Mammary epithelial cell (primary cell): ENCODE measurements at regions of chr1 and their contacts with region 1.

Region 1: GRCh38 chr1:212990276-212990675 is 25.4 kb downstream of the ANGEL2 start:
- DNase-seq: no peak
- H3K4me3 ChIP-seq: no peak overlapping the region
- H3K27ac ChIP-seq: no peak overlapping the region
- H3K4me1 ChIP-seq: peaks cover 4% of the 10 kb centered on the region
- H3K27me3 ChIP-seq: no peaks in the 10 kb centered on the region
- CTCF ChIP-seq: no peak

Region 2: DNA sequence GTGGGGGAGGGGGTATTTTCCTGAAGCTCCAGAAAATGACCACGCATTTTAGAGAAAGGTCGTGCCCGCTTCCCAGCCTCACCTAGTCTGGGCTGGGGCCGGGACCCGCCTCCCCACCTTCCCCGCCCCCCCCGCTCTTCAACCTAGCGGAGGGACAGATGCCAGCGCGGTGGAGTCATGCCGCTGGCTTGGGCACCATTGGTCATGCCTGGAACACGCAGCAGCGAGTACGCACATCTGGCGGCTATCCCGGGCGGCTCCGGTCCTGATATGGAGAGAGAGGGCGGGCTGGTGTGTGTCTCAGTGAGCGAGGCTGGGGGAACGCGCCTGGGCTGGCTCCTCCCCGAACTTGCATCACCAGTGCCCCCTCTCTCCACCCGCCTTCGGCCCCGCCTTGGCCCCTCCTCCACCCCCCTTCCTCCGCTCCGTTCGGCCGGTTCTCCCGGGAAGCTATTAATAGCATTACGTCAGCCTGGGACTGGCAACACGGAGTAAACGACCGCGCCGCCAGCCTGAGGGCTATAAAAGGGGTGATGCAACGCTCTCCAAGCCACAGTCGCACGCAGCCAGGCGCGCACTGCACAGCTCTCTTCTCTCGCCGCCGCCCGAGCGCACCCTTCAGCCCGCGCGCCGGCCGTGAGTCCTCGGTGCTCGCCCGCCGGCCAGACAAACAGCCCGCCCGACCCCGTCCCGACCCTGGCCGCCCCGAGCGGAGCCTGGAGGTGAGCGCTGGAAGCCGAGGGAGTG is 381.9 kb before region 1 on chr1 and contains the start of gene ATF3:
- CTCF ChIA-PET with region 1: no interaction called
- dilution Hi-C with region 1: no loop called
- in situ Hi-C with region 1: no loop called
- intact Hi-C with region 1: loop called (anchors 10 kb)
- DNase-seq: peak; percentile 99
- H3K4me3 ChIP-seq: peak within 1 kb of the TSS; percentile 69 to 76 (median 75)
- H3K27ac ChIP-seq: peak within 1 kb of the TSS; percentile 89
- H3K4me1 ChIP-seq: peaks cover 24% of the 10 kb centered on the region
- H3K27me3 ChIP-seq: no peaks in the 10 kb centered on the region
- CTCF ChIP-seq: no peak
- total RNA-seq, gene ATF3: 3.5 to 17.8 TPM

Region 3: DNA sequence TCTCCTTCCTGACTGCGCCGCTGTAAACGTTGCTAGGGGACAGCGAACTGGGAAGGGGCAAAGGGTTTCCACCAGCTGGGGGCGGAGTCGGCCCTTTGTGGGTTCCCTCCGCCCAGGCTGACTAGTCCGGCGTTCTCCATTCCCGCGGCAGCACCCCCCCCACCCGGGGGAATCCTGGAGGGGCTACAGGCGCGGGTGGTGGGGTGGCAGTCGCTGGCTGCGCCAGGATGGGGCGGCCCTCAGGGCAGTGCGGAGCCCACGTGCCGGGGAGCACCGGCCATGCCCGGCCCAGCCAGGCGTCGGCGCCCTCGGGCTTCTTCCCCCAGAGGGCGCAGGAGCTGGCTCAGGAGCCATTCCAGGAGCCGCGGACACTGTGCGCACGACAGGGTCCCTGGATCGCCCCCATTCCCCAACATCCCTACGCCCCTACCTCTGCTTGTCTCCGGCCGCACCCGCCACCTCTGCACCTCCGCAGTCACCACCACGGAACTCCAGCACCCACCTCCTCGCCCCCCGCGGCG is 291.1 kb before region 1 on chr1:
- CTCF ChIA-PET with region 1: no interaction called
- dilution Hi-C with region 1: no loop called
- in situ Hi-C with region 1: no loop called
- intact Hi-C with region 1: loop called (anchors 5 kb)
- DNase-seq: no peak
- H3K4me3 ChIP-seq: peak overlapping the region; percentile 33 to 53 (median 52)
- H3K27ac ChIP-seq: no peak overlapping the region
- H3K4me1 ChIP-seq: peaks cover 20% of the 10 kb centered on the region
- H3K27me3 ChIP-seq: peaks cover 28% of the 10 kb centered on the region
- CTCF ChIP-seq: peak in 1 of 2 donors; percentile 52

Region 4: DNA sequence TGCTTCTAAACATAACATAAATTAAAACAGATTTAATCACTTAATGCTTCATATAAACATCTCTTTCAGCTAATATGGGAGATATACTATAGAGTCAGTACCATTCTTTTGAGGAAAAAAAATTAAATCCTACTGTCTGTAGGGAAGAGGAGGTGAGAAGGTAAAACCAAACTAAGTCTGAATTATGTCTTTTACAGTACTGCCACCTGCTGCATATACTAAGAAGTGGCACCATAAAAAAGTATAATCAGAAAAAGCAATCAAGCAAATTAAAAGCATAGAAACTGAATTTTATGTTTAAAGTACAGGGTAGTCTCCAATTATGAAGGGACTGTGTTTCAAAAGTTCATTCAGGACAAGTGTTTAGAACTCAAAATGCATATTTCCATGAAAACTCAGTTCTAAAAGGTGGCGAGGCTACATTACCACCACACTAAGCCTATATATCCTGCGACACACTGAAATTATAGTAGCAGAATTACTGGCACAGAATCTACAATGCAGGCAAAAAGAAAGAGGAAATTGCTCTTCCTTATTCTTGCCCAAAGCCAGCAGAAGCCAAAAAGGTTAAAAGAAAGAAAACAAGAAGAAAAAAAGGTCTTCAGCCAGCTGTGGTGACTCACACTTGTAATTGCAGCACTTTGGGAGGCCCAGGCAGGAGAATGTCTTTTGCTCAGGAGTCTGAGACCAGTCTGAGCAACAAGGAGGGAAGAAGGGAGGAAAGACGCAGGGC is 207.7 kb before region 1 on chr1:
- CTCF ChIA-PET with region 1: no interaction called
- dilution Hi-C with region 1: no loop called
- in situ Hi-C with region 1: no loop called
- intact Hi-C with region 1: loop called (anchors 2 kb)
- DNase-seq: peak; percentile 7
- H3K4me3 ChIP-seq: no peak overlapping the region
- H3K27ac ChIP-seq: no peak overlapping the region
- H3K4me1 ChIP-seq: no peaks in the 10 kb centered on the region
- H3K27me3 ChIP-seq: no peaks in the 10 kb centered on the region
- CTCF ChIP-seq: peak; percentile 52 to 57

Region 5: GRCh38 chr1:212814537-212815334 is 175.5 kb before region 1 on chr1:
- CTCF ChIA-PET with region 1: interaction called, 4 read pairs
- dilution Hi-C with region 1: no loop called
- in situ Hi-C with region 1: loop called (anchors 25 kb)
- intact Hi-C with region 1: loop called (anchors 1 kb)
- DNase-seq: no peak
- H3K4me3 ChIP-seq: no peak overlapping the region
- H3K27ac ChIP-seq: no peak overlapping the region
- H3K4me1 ChIP-seq: no peaks in the 10 kb centered on the region
- H3K27me3 ChIP-seq: no peaks in the 10 kb centered on the region
- CTCF ChIP-seq: peak; percentile 21 to 36